ENCODE measurements at regions of chr20 and their contacts with region 1.

Region 1: GRCh38 chr20:6355754-6356451 is 233.1 kb upstream of the FERMT1 start:
- DNase-seq: no peak
- ATAC-seq: no peak
- H3K4me3 ChIP-seq: no peak overlapping the region
- H3K27ac ChIP-seq: no peak overlapping the region
- H3K4me1 ChIP-seq: no peaks in the 10 kb centered on the region
- H3K27me3 ChIP-seq: no peaks in the 10 kb centered on the region
- CTCF ChIP-seq: no peak
- EP300 ChIP-seq: no peak
- POLR2A ChIP-seq: no peak
- RAD21 ChIP-seq: no peak

Region 2: GRCh38 chr20:6231551-6231950 is 124.4 kb before region 1 on chr20:
- CTCF ChIA-PET with region 1: no interaction called
- POLR2A ChIA-PET with region 1: no interaction called
- RAD21 ChIA-PET with region 1: no interaction called
- SMC1A ChIA-PET with region 1: no interaction called
- in situ Hi-C with region 1: no loop called
- intact Hi-C with region 1: no loop called
- DNase-seq: no peak
- ATAC-seq: peak; percentile 33; the same call in 1 of the 3 replicates
- H3K4me3 ChIP-seq: no peak overlapping the region
- H3K27ac ChIP-seq: no peak overlapping the region
- H3K4me1 ChIP-seq: no peaks in the 10 kb centered on the region
- H3K27me3 ChIP-seq: no peaks in the 10 kb centered on the region
- CTCF ChIP-seq: no peak
- EP300 ChIP-seq: no peak
- POLR2A ChIP-seq: no peak
- RAD21 ChIP-seq: no peak

Region 3: DNA sequence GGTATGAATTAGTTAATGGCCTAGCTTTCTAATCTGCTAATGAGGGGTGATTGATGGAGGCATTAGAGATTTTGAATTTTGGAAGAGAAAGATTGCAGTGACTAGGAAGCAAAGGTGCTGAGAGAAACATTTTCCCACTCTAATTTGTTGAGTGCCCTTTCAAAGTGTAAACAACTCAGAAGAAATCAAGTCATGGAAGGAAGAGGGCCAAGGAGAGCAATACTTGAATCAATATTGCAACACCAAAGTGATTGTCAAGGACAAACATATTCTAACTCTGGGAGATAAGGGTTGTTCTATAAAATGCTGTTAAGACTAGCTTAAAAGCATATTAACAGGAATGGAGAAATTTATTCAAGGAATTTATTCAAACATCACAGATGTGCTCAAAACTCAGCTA is 50.4 kb before region 1 on chr20:
- CTCF ChIA-PET with region 1: no interaction called
- POLR2A ChIA-PET with region 1: no interaction called
- RAD21 ChIA-PET with region 1: no interaction called
- SMC1A ChIA-PET with region 1: no interaction called
- in situ Hi-C with region 1: no loop called
- intact Hi-C with region 1: loop called (anchors 5 kb)
- DNase-seq: no peak
- ATAC-seq: no peak
- H3K4me3 ChIP-seq: no peak overlapping the region
- H3K27ac ChIP-seq: no peak overlapping the region
- H3K4me1 ChIP-seq: no peaks in the 10 kb centered on the region
- H3K27me3 ChIP-seq: no peaks in the 10 kb centered on the region
- CTCF ChIP-seq: no peak
- EP300 ChIP-seq: no peak
- POLR2A ChIP-seq: no peak
- RAD21 ChIP-seq: no peak

Measured in GM12878 (cell line).